HepG2 (cell line): ENCODE measurements at regions of chr13 and their contacts with region 1.

Region 1: DNA sequence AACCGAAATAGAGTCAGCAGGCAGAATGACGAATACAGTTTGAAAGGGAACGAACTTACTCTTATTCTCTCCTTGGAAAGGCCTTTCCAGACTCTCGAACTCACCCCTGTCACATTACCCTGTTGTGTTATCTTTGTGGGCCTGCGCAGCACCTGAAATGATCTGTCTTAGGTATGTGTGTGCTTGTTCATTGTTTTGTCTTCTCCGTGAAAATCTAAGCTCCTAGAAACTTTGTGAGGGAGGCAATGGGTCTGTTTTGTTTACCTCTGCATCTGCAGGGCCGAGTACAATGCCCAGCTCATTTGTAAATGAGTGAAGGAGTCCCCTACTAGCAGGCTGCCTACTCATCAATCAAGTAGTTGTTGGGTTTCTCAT is 19.6 kb downstream of the HMGB1 start:
- DNase-seq: no peak
- ATAC-seq: peak; percentile 57
- H3K4me3 ChIP-seq: peak overlapping the region; percentile 37 to 66 (median 51)
- H3K27ac ChIP-seq: no peak overlapping the region
- H3K4me1 ChIP-seq: peaks cover 14% of the 10 kb centered on the region
- H3K27me3 ChIP-seq: peaks cover 0 to 21% of the 10 kb centered on the region in 2 experiments; a peak in 4 of 5 replicates
- CTCF ChIP-seq: no peak
- EP300 ChIP-seq: no peak
- POLR2A ChIP-seq: no peak
- RAD21 ChIP-seq: no peak

Region 2: GRCh38 chr13:30408319-30409101 is 37.6 kb before region 1 on chr13:
- CTCF ChIA-PET with region 1: no interaction called
- POLR2A ChIA-PET with region 1: no interaction called
- in situ Hi-C with region 1: no loop called
- intact Hi-C with region 1: loop called (anchors 5 kb)
- DNase-seq: peak; percentile 86
- ATAC-seq: peak; percentile 97
- H3K4me3 ChIP-seq: peak overlapping the region in 2 of 3 experiments; percentile 34 to 61; a peak in 2 of 6 replicates
- H3K27ac ChIP-seq: no peak overlapping the region
- H3K4me1 ChIP-seq: peaks cover 36% of the 10 kb centered on the region
- H3K27me3 ChIP-seq: peaks cover 1 to 26% of the 10 kb centered on the region in 2 experiments; a peak in 3 of 5 replicates
- CTCF ChIP-seq: peak; percentile 80
- EP300 ChIP-seq: no peak
- POLR2A ChIP-seq: no peak
- RAD21 ChIP-seq: peak; percentile 47; the same call in 1 of the 2 replicates

Region 3: DNA sequence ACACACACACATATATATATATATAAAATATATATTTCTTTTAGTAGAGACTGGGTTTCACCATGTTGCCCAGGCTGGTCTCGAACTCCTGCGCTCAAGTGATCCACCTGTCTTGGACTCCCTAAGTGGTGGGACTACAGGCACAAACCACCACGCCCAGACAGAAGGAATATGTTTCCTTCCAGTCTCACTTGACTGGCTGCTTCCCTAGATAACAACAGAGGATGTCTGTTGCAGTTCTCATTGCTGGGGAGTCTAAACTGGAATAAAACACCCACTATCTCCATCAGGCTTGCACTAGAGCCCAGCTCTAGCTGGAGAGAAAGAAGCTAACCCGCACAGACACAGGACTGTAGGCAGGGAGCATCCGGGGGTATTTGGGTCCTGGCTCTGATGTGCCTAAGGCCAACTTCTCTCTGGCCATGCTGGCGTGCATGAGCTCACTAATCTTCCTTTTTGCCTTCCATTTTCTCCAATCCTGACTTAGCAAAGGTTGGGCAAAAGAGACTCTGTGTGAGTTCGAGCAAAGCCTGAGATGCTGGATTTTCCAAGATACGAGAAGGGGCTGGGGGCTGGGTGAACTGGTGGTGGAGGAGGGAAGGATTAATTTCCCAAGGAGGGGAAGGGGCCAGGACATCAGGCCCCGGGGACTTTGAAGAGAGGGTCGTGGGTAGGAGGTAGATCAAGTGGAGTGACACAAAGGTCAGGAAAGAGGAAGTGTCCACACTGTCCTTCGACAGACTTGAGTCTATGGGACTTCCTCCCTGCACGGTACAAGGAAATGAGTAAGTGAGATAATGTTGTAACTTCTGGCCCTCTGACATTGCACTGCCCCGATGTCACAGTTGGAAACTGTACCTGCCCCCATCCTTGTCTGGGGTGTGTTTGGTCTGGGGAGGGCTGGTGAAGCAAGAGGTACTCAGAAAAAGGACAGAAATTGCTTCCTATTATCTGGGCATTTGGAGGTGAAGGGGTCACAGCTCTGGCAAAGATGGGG is 266.7 kb after region 1 on chr13:
- CTCF ChIA-PET with region 1: no interaction called
- POLR2A ChIA-PET with region 1: no interaction called
- in situ Hi-C with region 1: no loop called
- intact Hi-C with region 1: no loop called
- DNase-seq: no peak
- ATAC-seq: no peak
- H3K4me3 ChIP-seq: no peak overlapping the region
- H3K27ac ChIP-seq: no peak overlapping the region
- H3K4me1 ChIP-seq: no peaks in the 10 kb centered on the region
- H3K27me3 ChIP-seq: no peaks in the 10 kb centered on the region
- CTCF ChIP-seq: no peak
- EP300 ChIP-seq: no peak
- POLR2A ChIP-seq: no peak
- RAD21 ChIP-seq: no peak